AG04450 (cell line): ENCODE measurements at regions of chr2 and their contacts with region 1.

Region 1: DNA sequence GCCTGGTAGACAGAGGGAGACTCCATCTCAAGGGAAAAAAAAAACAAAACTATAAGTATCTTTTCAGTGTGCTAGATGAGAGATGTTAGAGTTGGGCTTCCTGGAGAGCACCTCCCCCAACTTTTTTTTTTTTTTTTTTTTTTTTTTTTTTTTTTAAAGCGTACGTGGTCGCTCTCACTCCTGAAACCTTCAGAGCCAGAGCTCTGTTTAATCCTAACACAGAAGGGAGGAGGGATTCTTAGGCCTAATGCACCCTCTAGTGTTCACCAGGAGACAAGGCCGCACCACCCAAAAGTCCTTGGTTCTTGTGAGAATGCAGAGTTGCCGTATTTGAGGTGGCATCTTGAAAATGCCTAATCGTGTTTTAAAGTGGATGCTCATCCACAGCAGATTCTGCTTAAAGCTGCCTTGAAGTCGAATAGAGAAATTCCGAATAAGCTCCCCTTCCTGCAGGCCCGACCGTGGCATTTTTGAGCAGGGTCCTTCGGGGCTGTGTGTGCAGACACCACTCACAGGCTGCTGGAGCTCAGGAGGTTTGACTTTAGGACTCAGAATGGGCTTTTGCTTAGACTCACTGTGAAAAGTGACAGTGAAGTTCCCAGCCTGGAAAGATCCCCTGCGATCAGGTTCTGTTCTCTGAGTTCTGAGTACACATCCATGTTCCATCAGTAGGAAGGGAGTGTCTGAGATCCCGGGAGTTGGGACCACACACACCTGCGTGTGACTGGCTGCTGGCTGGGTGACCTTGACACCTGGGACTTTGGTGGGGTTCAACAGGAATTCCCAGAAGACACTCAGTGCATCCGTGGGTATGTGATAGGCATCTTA is 252.6 kb downstream of the AGAP1 start:
- DNase-seq: peak; percentile 79
- H3K4me3 ChIP-seq: no peak overlapping the region
- H3K27ac ChIP-seq: peak overlapping the region; percentile 21
- H3K27me3 ChIP-seq: no peaks in the 10 kb centered on the region
- CTCF ChIP-seq: peak; percentile 87

Region 2: GRCh38 chr2:235129850-235130249 is 616.6 kb before region 1 on chr2:
- CTCF ChIA-PET with region 1: interaction called, 44 read pairs
- POLR2A ChIA-PET with region 1: no interaction called
- DNase-seq: no peak
- H3K4me3 ChIP-seq: no peak overlapping the region
- H3K27ac ChIP-seq: no peak overlapping the region
- H3K27me3 ChIP-seq: peaks cover 17% of the 10 kb centered on the region
- CTCF ChIP-seq: no peak

Region 3: GRCh38 chr2:235508371-235509160 is 237.9 kb before region 1 on chr2:
- CTCF ChIA-PET with region 1: interaction called, 10 read pairs
- POLR2A ChIA-PET with region 1: no interaction called
- DNase-seq: no peak
- H3K4me3 ChIP-seq: no peak overlapping the region
- H3K27ac ChIP-seq: no peak overlapping the region
- H3K27me3 ChIP-seq: no peaks in the 10 kb centered on the region
- CTCF ChIP-seq: no peak

Region 4: DNA sequence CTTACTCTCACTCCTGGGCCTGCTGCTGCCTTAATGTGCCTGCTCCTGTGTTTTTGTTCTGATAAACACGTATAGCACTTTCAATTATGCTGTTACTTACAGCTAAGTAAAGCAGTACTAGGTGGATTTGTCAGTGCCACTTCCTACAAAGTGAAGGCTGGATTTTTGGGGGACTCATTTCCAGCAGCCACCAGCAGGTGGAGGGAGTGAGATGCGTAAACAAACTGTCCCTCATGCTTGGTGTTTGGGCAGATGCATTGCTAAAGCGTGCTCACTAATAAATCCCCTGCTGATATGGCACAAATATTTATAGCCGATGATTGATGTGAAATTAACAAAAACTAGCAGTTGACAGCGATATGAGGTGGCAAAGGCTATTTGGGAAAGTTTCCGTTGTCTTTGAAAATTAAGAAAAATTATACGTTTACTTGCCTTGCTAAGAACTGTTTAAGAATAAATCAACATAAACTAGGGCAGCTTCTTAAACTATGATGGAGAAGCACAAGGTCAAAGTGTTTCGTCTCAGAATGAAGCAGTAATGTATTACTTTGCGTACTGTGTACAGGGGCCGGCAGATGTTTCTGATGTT is 151.0 kb before region 1 on chr2:
- CTCF ChIA-PET with region 1: interaction called, 375 read pairs
- POLR2A ChIA-PET with region 1: interaction called, 3 read pairs
- DNase-seq: peak; percentile 51
- H3K4me3 ChIP-seq: no peak overlapping the region
- H3K27ac ChIP-seq: no peak overlapping the region
- H3K27me3 ChIP-seq: no peaks in the 10 kb centered on the region
- CTCF ChIP-seq: peak; percentile 93

Region 5: DNA sequence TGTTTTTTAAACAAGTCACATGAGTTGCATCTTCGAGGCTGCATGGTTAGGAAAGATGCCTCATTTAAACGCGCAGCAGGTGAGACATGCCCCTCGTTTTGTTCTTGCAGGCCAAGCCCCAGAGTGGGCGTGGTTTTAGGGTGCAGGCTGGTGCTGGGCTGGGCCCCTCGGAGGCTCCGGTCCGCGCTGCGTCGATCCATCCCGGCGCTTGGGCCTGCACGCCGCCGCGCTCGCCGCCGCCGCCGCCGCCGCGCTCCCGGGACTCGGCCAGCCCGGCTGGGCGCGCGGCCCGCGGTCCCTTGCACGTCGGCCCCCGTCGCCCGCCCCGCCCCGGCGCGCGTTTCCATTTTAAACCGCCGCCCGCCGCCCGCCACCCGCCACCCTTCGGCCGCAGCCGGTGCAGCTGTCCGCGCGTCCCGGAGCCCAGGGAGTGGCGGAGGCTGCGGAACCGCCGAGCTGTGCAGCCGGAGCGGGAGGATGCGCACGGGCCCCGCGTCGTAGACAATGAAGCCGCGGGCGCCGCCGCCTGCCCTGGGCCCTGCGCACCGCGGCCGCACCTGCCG is 77.1 kb before region 1 on chr2:
- CTCF ChIA-PET with region 1: interaction called, 17 read pairs
- POLR2A ChIA-PET with region 1: no interaction called
- DNase-seq: no peak
- H3K4me3 ChIP-seq: peak overlapping the region; percentile 56
- H3K27ac ChIP-seq: no peak overlapping the region
- H3K27me3 ChIP-seq: no peaks in the 10 kb centered on the region
- CTCF ChIP-seq: no peak

Region 6: DNA sequence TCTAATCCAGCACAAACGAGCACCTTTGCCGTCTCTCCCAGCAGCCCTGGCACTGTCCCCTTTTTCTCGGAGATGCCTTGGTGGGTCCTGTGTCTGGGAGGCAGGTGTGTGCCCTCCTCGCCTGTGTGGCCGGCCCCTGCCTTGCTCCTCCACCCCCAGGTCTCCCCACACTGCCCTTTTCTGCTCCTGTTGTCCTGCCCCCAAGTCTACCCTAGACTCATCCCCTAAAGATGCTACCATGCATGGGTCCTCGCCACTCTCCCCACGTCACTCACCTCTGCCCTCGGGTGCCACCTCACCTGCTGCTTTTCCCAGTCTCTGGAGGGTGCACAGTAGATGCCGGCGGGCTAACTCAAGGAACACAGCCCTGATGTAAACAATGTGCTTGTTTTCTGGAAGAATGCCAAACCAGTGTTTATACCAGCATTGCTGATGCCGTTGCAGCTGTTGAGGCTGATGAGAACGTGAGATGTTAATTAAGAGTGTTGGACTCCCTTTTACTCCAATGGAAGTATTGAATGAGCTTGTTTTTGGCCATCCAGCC is 29.5 kb before region 1 on chr2:
- CTCF ChIA-PET with region 1: interaction called, 24 read pairs
- POLR2A ChIA-PET with region 1: no interaction called
- DNase-seq: no peak
- H3K4me3 ChIP-seq: no peak overlapping the region
- H3K27ac ChIP-seq: no peak overlapping the region
- H3K27me3 ChIP-seq: no peaks in the 10 kb centered on the region
- CTCF ChIP-seq: no peak

Region 7: GRCh38 chr2:235766278-235766677 is 19.8 kb after region 1 on chr2:
- CTCF ChIA-PET with region 1: interaction called, 15 read pairs
- POLR2A ChIA-PET with region 1: no interaction called
- DNase-seq: peak; percentile 57
- H3K4me3 ChIP-seq: no peak overlapping the region
- H3K27ac ChIP-seq: no peak overlapping the region
- H3K27me3 ChIP-seq: no peaks in the 10 kb centered on the region
- CTCF ChIP-seq: peak; percentile 87

Region 8: DNA sequence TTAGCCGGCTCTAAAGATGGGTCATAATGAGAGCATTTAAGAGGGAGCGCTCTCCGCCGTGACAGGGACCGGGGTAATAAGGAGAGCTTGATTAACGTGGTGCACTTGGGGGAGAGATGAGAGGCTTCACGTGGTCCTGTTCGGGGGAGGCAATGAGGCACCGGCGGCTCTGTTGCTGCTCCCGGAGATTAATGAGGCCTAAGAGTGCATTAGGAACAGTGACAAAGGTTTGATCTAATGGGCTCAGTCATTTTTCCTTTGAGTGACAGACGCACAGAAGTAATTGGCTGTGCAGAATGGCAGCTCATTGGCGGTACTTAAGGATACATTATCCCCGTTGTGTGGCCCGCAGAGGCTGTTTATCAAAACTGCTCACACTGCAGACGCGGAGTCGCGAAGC is 171.0 kb after region 1 on chr2:
- CTCF ChIA-PET with region 1: no interaction called
- POLR2A ChIA-PET with region 1: no interaction called
- DNase-seq: no peak
- H3K4me3 ChIP-seq: no peak overlapping the region
- H3K27ac ChIP-seq: no peak overlapping the region
- H3K27me3 ChIP-seq: no peaks in the 10 kb centered on the region
- CTCF ChIP-seq: no peak